ENCODE measurements at regions of chr1 and their contacts with region 1.

Region 1: DNA sequence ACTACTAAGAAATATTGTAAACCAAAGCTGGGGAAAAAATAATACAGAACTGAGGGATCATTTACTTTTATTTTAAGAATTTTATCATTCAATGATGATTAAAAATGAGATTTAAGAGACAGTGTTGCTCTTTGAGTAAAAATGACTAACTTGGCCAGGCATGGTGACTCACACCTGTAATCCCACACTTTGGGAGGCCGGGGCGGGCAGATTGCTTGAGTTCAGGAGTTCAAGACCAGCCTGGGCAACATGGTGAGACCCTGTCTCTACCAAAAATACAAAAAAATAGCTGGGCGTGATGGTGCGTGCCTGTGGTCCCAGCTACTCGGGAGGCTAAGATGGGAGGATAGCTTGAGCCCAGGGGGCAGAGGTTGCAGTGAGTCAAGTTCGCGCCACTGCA is 21.8 kb upstream of the PLEKHO1 start:
- DNase-seq: no peak
- ATAC-seq: no peak
- H3K4me3 ChIP-seq: no peak overlapping the region
- H3K27ac ChIP-seq: no peak overlapping the region
- H3K4me1 ChIP-seq: no peaks in the 10 kb centered on the region
- H3K27me3 ChIP-seq: no peaks in the 10 kb centered on the region
- CTCF ChIP-seq: no peak
- EP300 ChIP-seq: no peak
- POLR2A ChIP-seq: no peak
- RAD21 ChIP-seq: no peak

Region 2: GRCh38 chr1:150141452-150141851 is 13.6 kb after region 1 on chr1:
- CTCF ChIA-PET with region 1: no interaction called
- POLR2A ChIA-PET with region 1: interaction called, 11 read pairs
- in situ Hi-C with region 1: no loop called
- intact Hi-C with region 1: no loop called
- DNase-seq: no peak
- ATAC-seq: no peak
- H3K4me3 ChIP-seq: no peak overlapping the region
- H3K27ac ChIP-seq: no peak overlapping the region
- H3K4me1 ChIP-seq: peaks cover 0 to 10% of the 10 kb centered on the region in 2 experiments; a peak in 3 of 5 replicates
- H3K27me3 ChIP-seq: no peaks in the 10 kb centered on the region
- CTCF ChIP-seq: no peak
- EP300 ChIP-seq: no peak
- POLR2A ChIP-seq: no peak
- RAD21 ChIP-seq: no peak

Region 3: GRCh38 chr1:150259758-150260669 is 132.1 kb after region 1 on chr1:
- CTCF ChIA-PET with region 1: no interaction called
- POLR2A ChIA-PET with region 1: no interaction called
- in situ Hi-C with region 1: no loop called
- intact Hi-C with region 1: no loop called
- DNase-seq: peak in 2 of 4 experiments; percentile 66 to 75
- ATAC-seq: peak; percentile 79
- H3K4me3 ChIP-seq: no peak overlapping the region
- H3K27ac ChIP-seq: 0 out of 3 replicates have a peak overlapping the region, but pooled peaks have one; percentile 3
- H3K4me1 ChIP-seq: peaks cover 23 to 26% of the 10 kb centered on the region in 2 experiments
- H3K27me3 ChIP-seq: peaks cover 0 to 4% of the 10 kb centered on the region in 2 experiments; a peak in 2 of 5 replicates
- CTCF ChIP-seq: no peak
- EP300 ChIP-seq: no peak
- POLR2A ChIP-seq: no peak
- RAD21 ChIP-seq: no peak

Region 4: GRCh38 chr1:150397402-150398032 is 269.6 kb after region 1 on chr1:
- CTCF ChIA-PET with region 1: no interaction called
- POLR2A ChIA-PET with region 1: no interaction called
- in situ Hi-C with region 1: no loop called
- intact Hi-C with region 1: no loop called
- DNase-seq: no peak
- ATAC-seq: no peak
- H3K4me3 ChIP-seq: no peak overlapping the region
- H3K27ac ChIP-seq: no peak overlapping the region
- H3K4me1 ChIP-seq: no peaks in the 10 kb centered on the region; a peak in 1 of 5 replicates
- H3K27me3 ChIP-seq: no peaks in the 10 kb centered on the region
- CTCF ChIP-seq: no peak
- EP300 ChIP-seq: no peak
- POLR2A ChIP-seq: no peak
- RAD21 ChIP-seq: no peak

Region 5: DNA sequence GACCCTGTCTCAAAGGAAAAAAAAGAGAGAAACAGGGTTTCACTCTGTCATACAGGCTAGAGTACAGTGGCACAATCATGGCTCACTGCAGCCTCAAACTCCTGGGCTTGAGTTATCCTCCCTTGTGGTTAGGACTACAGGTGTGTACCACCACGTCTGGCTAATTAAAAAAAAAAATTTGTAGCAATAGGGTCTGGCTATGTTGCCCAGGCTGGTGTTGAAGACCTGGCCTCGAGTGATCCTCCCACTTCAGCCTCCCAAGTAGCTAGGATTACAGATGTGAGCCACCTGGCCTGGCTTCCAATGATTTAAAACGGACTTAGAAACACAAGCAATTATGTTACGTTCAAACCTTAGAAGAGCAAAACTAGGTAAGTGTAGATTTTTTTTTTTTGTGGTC is 547.0 kb after region 1 on chr1:
- CTCF ChIA-PET with region 1: no interaction called
- POLR2A ChIA-PET with region 1: no interaction called
- in situ Hi-C with region 1: no loop called
- intact Hi-C with region 1: no loop called
- DNase-seq: no peak
- ATAC-seq: no peak
- H3K4me3 ChIP-seq: no peak overlapping the region
- H3K27ac ChIP-seq: no peak overlapping the region
- H3K4me1 ChIP-seq: no peaks in the 10 kb centered on the region
- H3K27me3 ChIP-seq: no peaks in the 10 kb centered on the region
- CTCF ChIP-seq: no peak
- EP300 ChIP-seq: no peak
- POLR2A ChIP-seq: no peak
- RAD21 ChIP-seq: no peak